Heart left ventricle (tissue), 16 donors: ENCODE measurements at regions of chr18 and their contacts with region 1.

Region 1: DNA sequence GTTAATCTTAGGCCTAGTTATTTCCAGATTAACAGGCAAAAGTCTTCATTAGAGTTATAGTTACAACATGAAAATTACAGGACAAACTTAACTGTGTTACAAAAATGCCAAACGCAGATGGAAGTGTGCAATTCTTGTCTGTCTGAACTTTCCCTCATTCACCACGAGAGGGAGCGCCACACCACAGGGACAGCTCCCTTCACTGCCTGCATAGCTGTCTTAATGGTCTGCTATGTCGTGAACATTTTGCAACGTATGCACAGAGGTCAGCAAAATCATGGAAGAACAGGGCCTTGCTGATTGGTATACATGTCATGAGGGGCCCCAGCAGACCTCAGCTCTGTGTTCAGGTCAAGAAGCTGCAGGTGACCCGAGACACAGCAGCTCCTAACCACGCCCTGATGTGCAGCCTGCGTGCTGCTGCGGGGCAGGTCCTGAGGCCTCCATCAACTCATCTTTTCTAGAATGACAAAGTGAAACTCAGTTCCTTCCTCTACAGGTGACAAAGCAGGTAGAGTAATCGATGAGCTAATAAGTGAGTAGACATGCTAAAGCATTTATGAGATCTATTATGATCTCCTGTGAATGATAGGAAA is 78.8 kb upstream of the ATP8B1 start:
- DNase-seq: peak; percentile 35 to 65 (median 62)
- ATAC-seq: peak; percentile 77 to 94 (median 88)
- H3K4me3 ChIP-seq: no peak overlapping the region
- H3K27ac ChIP-seq: no peak overlapping the region
- H3K4me1 ChIP-seq: peaks cover 0 to 5% (median 0%) of the 10 kb centered on the region in 12 donors
- H3K27me3 ChIP-seq: no peaks in the 10 kb centered on the region
- CTCF ChIP-seq: peak; percentile 83 to 95 (median 89)
- POLR2A ChIP-seq: no peak

Region 2: GRCh38 chr18:57621246-57621604 is 260.7 kb before region 1 on chr18:
- intact Hi-C with region 1: loop called in 1 of 10 experiments (anchors 10 kb)
- DNase-seq: no peak
- ATAC-seq: peak; percentile 4 to 57 (median 49)
- H3K4me3 ChIP-seq: peak overlapping the region; percentile 60 to 93 (median 84)
- H3K27ac ChIP-seq: peak overlapping the region; percentile 58 to 96 (median 88)
- H3K4me1 ChIP-seq: peaks cover 0 to 38% (median 17%) of the 10 kb centered on the region in 12 donors
- H3K27me3 ChIP-seq: no peaks in the 10 kb centered on the region
- CTCF ChIP-seq: no peak
- POLR2A ChIP-seq: no peak

Region 3: DNA sequence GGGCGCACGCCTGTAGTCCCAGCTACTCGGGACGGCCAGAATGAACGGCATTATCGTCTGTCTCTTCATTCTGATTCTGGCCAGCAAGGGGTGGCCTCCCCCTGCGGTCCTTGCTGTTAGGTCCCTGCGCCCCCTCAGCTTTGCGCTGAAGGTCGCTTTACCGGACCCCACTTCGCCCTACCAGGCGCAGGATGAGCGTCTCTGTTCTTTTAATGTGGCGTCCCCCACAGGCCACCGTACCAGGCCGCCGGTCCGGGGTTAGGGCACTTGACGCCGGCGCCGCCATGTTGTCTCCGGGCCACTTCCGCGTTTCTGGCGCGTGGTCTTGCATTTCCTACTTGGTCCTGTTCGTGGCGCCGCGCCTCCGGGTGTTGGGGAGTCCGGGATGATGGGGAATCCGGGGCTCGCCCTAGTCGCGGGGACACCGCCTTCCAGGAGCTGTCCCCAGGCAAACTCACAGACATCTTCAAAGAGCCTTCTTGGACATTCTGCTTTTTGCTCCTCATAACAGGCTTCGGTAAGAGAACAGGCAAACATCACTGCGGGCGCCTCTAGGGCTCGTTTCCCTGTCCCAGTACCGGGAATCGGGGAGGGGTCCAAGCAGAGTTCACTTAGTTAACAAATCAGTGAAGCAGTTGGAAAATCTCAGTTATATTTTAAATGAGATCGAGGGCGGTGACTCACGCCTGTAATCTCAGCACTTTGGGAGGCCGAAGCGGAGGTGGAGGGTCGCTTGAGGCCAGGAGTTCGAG is 251.7 kb before region 1 on chr18:
- intact Hi-C with region 1: loop called in 5 of 10 experiments (anchors 2 to 10 kb)
- DNase-seq: peak; percentile 97 to 98 (median 98)
- ATAC-seq: peak; percentile 98 to 99 (median 98)
- H3K4me3 ChIP-seq: peak overlapping the region; percentile 50 to 81 (median 70)
- H3K27ac ChIP-seq: peak overlapping the region in 11 of 12 donors; percentile 42 to 90 (median 83)
- H3K4me1 ChIP-seq: peaks cover 0 to 18% (median 9%) of the 10 kb centered on the region in 12 donors
- H3K27me3 ChIP-seq: no peaks in the 10 kb centered on the region
- CTCF ChIP-seq: peak; percentile 56 to 95 (median 70)
- POLR2A ChIP-seq: peak in 1 of 2 donors; percentile 40

Region 4: DNA sequence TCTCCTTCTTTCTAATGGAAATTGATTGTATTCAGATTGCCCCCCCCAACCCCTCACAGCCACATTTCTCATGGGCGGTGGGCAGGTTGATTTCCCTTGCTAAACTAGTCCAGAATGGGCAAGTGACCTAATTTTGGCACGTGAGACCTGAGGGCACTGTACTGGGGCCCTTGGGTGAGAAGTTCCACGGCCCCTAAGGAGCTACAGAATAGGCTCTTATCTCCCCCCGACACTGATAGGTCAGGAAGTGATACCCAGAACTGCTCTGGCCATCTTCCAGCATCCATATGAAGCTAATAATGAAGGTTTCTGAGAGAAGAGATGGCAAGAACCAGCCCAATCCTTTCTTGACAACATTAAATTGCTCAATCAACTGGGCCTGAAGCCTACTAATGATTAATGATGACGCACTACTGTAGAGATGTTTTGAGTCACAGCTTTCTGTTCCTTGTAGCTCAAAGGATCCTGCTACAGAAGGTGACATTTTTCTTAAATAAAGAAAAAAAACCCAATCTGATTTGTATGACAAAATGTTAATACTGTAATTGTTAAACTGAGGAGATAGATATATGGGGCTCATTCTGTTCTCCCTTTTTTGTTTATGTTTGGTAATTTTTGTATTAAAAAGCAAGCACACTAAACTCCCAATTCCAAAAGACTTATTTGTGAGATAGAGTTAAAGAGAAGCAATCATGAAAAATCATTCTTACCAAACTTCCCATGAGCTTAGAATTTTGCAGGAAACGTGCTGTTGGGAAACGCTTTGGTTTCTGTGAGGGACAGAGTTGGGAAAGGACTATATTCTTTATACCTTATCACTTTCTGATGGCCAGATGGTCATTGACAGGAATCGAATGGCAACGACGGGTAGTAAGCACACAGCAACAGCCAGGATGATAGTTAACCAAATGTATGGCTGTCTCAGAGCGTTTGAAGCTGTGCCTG is 232.1 kb before region 1 on chr18:
- intact Hi-C with region 1: loop called in 2 of 10 experiments (anchors 10 kb)
- DNase-seq: no peak
- ATAC-seq: peak; percentile 57 to 86 (median 63)
- H3K4me3 ChIP-seq: no peak overlapping the region
- H3K27ac ChIP-seq: peak overlapping the region in 2 of 12 donors; percentile 3 to 77
- H3K4me1 ChIP-seq: peaks cover 0 to 15% (median 0%) of the 10 kb centered on the region in 12 donors
- H3K27me3 ChIP-seq: no peaks in the 10 kb centered on the region
- CTCF ChIP-seq: no peak
- POLR2A ChIP-seq: no peak

Region 5: GRCh38 chr18:58117786-58118403 is 236.0 kb after region 1 on chr18:
- intact Hi-C with region 1: loop called (anchors 2 to 5 kb)
- DNase-seq: no peak
- ATAC-seq: peak in 3 of 4 donors; percentile 68 to 80 (median 77)
- H3K4me3 ChIP-seq: no peak overlapping the region
- H3K27ac ChIP-seq: no peak overlapping the region
- H3K4me1 ChIP-seq: peaks cover 0 to 6% (median 0%) of the 10 kb centered on the region in 12 donors
- H3K27me3 ChIP-seq: no peaks in the 10 kb centered on the region
- CTCF ChIP-seq: no peak
- POLR2A ChIP-seq: no peak